WTC11 (cell line): ENCODE measurements at regions of chr1 and their contacts with region 1.

Region 1: GRCh38 chr1:26391450-26391849 is 18.9 kb upstream of the ZNF683 start:
- DNase-seq: peak; percentile 38
- ATAC-seq: peak; percentile 86
- H3K4me3 Mint-ChIP-seq: no peak overlapping the region
- H3K27ac Mint-ChIP-seq: no peak overlapping the region
- H3K4me1 Mint-ChIP-seq: peaks cover 18% of the 10 kb centered on the region
- H3K27me3 Mint-ChIP-seq: no peaks in the 10 kb centered on the region
- CTCF ChIP-seq: peak; percentile 72

Region 2: GRCh38 chr1:26279456-26280332 is 111.8 kb before region 1 on chr1 and contains the start of gene SH3BGRL3:
- CTCF ChIA-PET with region 1: interaction called, 81 read pairs
- POLR2A ChIA-PET with region 1: interaction called, 8 read pairs
- DNase-seq: peak; percentile 76
- ATAC-seq: peak; percentile 71
- H3K4me3 Mint-ChIP-seq: peak within 1 kb of the TSS; percentile 85
- H3K27ac Mint-ChIP-seq: peak within 1 kb of the TSS; percentile 78
- H3K4me1 Mint-ChIP-seq: peaks cover 40% of the 10 kb centered on the region
- H3K27me3 Mint-ChIP-seq: no peaks in the 10 kb centered on the region
- CTCF ChIP-seq: no peak
- total RNA-seq, gene SH3BGRL3: 70.8 to 92.9 TPM (median 92.3 TPM) in 3 replicates

Region 3: DNA sequence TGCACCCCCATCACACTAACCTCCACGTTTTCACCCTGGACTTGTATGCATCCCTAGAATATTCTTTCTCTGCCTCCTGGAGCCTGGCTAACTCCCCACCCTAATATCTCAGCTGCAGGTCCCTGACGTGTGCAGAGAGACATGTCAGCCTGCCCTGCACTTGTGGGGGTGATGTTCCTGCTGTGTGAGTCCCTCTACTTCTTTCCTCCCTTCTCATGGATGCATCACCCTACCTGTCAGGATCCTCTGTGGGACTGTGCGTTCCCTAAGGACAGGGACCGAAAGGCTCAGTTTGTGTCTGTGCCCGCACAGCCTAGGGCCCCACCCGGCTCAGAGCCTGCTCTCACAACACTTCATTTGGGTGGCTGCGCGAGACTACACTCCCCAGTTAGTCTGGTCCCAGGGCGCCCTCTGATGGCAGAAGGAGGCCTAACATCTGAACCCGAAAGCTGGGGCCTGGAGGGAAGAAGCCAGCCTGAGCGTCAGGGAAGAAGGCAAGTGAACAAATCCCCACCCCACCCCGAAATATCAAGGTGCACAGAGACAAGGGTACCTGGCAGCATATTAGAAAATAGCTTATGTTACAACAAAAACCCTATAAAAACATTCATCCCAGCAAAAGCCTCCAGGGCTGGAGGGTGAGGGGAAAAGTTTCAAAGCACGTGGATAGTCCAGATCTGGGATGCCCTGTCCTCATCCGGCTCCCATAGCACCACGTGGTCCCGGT is 70.0 kb before region 1 on chr1:
- CTCF ChIA-PET with region 1: interaction called, 13 read pairs
- POLR2A ChIA-PET with region 1: no interaction called
- DNase-seq: peak; percentile 98
- ATAC-seq: peak; percentile 83
- H3K4me3 Mint-ChIP-seq: no peak overlapping the region
- H3K27ac Mint-ChIP-seq: peak overlapping the region; percentile 93
- H3K4me1 Mint-ChIP-seq: peaks cover 20% of the 10 kb centered on the region
- H3K27me3 Mint-ChIP-seq: no peaks in the 10 kb centered on the region
- CTCF ChIP-seq: peak; percentile 85

Region 4: DNA sequence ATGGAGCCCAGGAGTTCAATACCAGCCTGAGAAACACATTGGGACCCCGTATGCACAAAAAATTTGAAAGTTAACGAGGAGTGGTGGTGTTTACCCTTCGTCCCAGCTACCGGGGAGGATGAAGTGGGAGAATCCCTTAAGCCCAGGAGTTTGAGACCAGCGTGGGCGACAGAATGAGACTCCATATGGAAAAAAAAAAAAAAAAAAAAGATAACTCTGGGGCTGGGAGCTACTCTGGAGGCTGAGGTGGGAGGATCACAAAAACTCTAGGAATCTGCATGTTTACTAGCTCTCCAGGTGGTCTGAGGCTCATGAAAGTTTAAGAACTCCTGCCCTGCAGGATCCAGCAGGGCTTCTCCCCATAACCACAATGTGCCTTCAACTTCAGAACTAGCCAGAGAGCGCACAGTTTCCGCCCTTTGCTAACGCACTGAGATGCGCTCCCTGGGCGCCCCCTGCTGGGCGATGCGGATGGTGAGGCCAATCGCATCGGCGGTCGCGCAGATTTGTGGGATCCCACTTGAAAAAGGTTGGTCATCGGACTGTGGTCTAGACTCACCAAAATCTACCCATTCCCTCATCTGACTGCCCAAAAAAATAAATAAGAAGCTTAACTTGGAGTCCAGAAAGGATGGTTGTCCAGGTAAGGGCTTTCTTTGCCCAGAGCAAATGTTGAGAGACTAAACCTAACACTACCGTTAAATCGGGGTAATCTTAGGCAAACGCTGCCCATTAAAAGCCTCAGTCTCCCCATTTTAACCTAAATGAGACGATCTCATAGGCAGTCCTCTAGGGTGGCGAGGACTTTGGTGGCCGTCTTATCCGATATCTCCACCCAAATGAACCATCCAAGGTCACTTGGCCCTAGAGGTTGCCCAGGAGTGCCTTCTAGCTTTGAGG is 27.7 kb before region 1 on chr1:
- CTCF ChIA-PET with region 1: interaction called, 11 read pairs
- POLR2A ChIA-PET with region 1: no interaction called
- DNase-seq: peak; percentile 87
- ATAC-seq: peak; percentile 54
- H3K4me3 Mint-ChIP-seq: no peak overlapping the region
- H3K27ac Mint-ChIP-seq: no peak overlapping the region
- H3K4me1 Mint-ChIP-seq: peaks cover 26% of the 10 kb centered on the region
- H3K27me3 Mint-ChIP-seq: peaks cover 43% of the 10 kb centered on the region
- CTCF ChIP-seq: peak; percentile 79

Region 5: GRCh38 chr1:26373281-26373680 is 18.2 kb before region 1 on chr1:
- CTCF ChIA-PET with region 1: interaction called, 14 read pairs
- POLR2A ChIA-PET with region 1: no interaction called
- DNase-seq: no peak
- ATAC-seq: no peak
- H3K4me3 Mint-ChIP-seq: no peak overlapping the region
- H3K27ac Mint-ChIP-seq: no peak overlapping the region
- H3K4me1 Mint-ChIP-seq: peaks cover 19% of the 10 kb centered on the region
- H3K27me3 Mint-ChIP-seq: peaks cover 7% of the 10 kb centered on the region
- CTCF ChIP-seq: no peak

Region 6: DNA sequence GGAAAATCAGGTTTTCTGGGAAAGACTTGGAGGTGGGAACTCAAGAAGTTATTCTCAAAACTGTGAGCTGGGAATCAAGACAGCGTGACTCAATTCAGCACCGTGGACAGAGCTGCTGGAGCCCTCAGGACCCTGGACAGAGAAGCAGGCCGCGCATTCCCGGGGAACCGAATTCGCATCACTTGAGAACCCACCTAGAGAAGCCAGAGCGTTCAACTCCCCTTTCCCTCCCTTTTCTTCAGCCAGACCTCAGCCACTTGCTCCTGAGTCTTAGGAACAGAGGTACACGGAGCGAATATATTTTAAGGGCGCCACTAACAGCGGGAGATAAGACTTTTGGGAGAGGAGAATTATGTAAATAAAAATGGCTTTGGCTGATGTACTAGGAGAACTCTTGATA is 17.2 kb after region 1 on chr1:
- CTCF ChIA-PET with region 1: interaction called, 10 read pairs
- POLR2A ChIA-PET with region 1: interaction called, 14 read pairs
- DNase-seq: peak; percentile 90
- ATAC-seq: peak; percentile 11
- H3K4me3 Mint-ChIP-seq: peak overlapping the region; percentile 84
- H3K27ac Mint-ChIP-seq: peak overlapping the region; percentile 83
- H3K4me1 Mint-ChIP-seq: peaks cover 32% of the 10 kb centered on the region
- H3K27me3 Mint-ChIP-seq: no peaks in the 10 kb centered on the region; the same call in 1 of the 2 replicates
- CTCF ChIP-seq: no peak